ENCODE measurements at regions of chr10 and their contacts with region 1.

Region 1: GRCh38 chr10:97407211-97407951 is 6.2 kb upstream of the RRP12 start:
- DNase-seq: peak; percentile 34 to 48
- H3K4me3 ChIP-seq: no peak overlapping the region
- H3K27ac ChIP-seq: no peak overlapping the region
- H3K4me1 ChIP-seq: peaks cover 17% of the 10 kb centered on the region
- H3K27me3 ChIP-seq: no peaks in the 10 kb centered on the region
- CTCF ChIP-seq: peak; percentile 67

Region 2: GRCh38 chr10:97445722-97446639 is 38.6 kb after region 1 on chr10 and contains the starts of genes EXOSC1 and ZDHHC16:
- CTCF ChIA-PET with region 1: no interaction called
- POLR2A ChIA-PET with region 1: no interaction called
- intact Hi-C with region 1: loop called (anchors 5 kb)
- DNase-seq: peak; percentile 85 to 87
- H3K4me3 ChIP-seq: peak within 1 kb of the TSS; percentile 97
- H3K27ac ChIP-seq: no peak within 1 kb of the TSS
- H3K4me1 ChIP-seq: peaks cover 30% of the 10 kb centered on the region
- H3K27me3 ChIP-seq: no peaks in the 10 kb centered on the region
- CTCF ChIP-seq: no peak
- total RNA-seq, gene EXOSC1: 25.4 and 27.0 TPM in 2 replicates
- total RNA-seq, gene ZDHHC16: 29.1 and 29.6 TPM in 2 replicates

Region 3: GRCh38 chr10:97463363-97464132 is 56.2 kb after region 1 on chr10:
- CTCF ChIA-PET with region 1: no interaction called
- POLR2A ChIA-PET with region 1: no interaction called
- intact Hi-C with region 1: no loop called
- DNase-seq: peak; percentile 54 to 71
- H3K4me3 ChIP-seq: no peak overlapping the region
- H3K27ac ChIP-seq: 0 out of 2 replicates have a peak overlapping the region, but pooled peaks have one; percentile 19
- H3K4me1 ChIP-seq: peaks cover 7% of the 10 kb centered on the region; the same call in 1 of the 2 replicates
- H3K27me3 ChIP-seq: no peaks in the 10 kb centered on the region
- CTCF ChIP-seq: peak; percentile 87

Region 4: GRCh38 chr10:97612386-97612785 is 205.0 kb after region 1 on chr10:
- CTCF ChIA-PET with region 1: no interaction called
- POLR2A ChIA-PET with region 1: no interaction called
- intact Hi-C with region 1: loop called (anchors 1 kb)
- DNase-seq: peak; percentile 10 to 51
- H3K4me3 ChIP-seq: no peak overlapping the region
- H3K27ac ChIP-seq: no peak overlapping the region
- H3K4me1 ChIP-seq: no peaks in the 10 kb centered on the region
- H3K27me3 ChIP-seq: no peaks in the 10 kb centered on the region
- CTCF ChIP-seq: peak; percentile 67